Calu3 (cell line): ENCODE measurements at regions of chr16 and their contacts with region 1.

Region 1: GRCh38 chr16:24580665-24581064 is 41.3 kb downstream of the RBBP6 start:
- DNase-seq: no peak
- H3K4me3 Mint-ChIP-seq: no peak overlapping the region
- H3K27ac Mint-ChIP-seq: no peak overlapping the region
- H3K4me1 Mint-ChIP-seq: peaks cover 13% of the 10 kb centered on the region
- H3K27me3 Mint-ChIP-seq: no peaks in the 10 kb centered on the region
- CTCF ChIP-seq: no peak

Region 2: GRCh38 chr16:24418666-24419065 is 162.0 kb before region 1 on chr16:
- CTCF ChIA-PET with region 1: no interaction called
- intact Hi-C with region 1: no loop called
- DNase-seq: no peak
- H3K4me3 Mint-ChIP-seq: no peak overlapping the region
- H3K27ac Mint-ChIP-seq: no peak overlapping the region
- H3K4me1 Mint-ChIP-seq: no peaks in the 10 kb centered on the region
- H3K27me3 Mint-ChIP-seq: peaks cover 52% of the 10 kb centered on the region
- CTCF ChIP-seq: no peak

Region 3: GRCh38 chr16:24689145-24689544 is 108.5 kb after region 1 on chr16:
- CTCF ChIA-PET with region 1: interaction called, 4 read pairs
- intact Hi-C with region 1: loop called (anchors 2 kb)
- DNase-seq: peak; percentile 48
- H3K4me3 Mint-ChIP-seq: no peak overlapping the region
- H3K27ac Mint-ChIP-seq: no peak overlapping the region
- H3K4me1 Mint-ChIP-seq: peaks cover 10% of the 10 kb centered on the region
- H3K27me3 Mint-ChIP-seq: no peaks in the 10 kb centered on the region
- CTCF ChIP-seq: peak; percentile 67

Region 4: DNA sequence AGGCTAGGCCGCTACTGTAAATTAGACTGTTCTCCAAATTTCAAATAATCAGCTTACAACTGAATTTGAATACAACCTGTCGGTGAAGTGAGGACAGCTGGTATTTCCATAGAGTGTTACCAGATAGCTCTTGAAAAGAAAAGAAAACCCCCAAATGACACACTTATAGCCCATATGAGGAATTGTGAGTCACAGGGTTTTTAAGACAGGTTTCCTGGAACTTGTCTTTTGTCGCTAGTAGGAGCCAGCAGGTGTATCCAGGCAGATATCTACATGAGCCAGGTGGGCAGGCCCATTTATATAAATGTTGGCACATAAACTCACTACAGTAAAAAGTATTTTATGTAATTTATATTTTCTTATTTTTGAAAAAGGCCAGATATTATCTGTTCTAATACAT is 172.8 kb after region 1 on chr16:
- CTCF ChIA-PET with region 1: no interaction called
- intact Hi-C with region 1: loop called (anchors 5 kb)
- DNase-seq: no peak
- H3K4me3 Mint-ChIP-seq: no peak overlapping the region
- H3K27ac Mint-ChIP-seq: no peak overlapping the region
- H3K4me1 Mint-ChIP-seq: peaks cover 9% of the 10 kb centered on the region
- H3K27me3 Mint-ChIP-seq: no peaks in the 10 kb centered on the region
- CTCF ChIP-seq: no peak

Region 5: DNA sequence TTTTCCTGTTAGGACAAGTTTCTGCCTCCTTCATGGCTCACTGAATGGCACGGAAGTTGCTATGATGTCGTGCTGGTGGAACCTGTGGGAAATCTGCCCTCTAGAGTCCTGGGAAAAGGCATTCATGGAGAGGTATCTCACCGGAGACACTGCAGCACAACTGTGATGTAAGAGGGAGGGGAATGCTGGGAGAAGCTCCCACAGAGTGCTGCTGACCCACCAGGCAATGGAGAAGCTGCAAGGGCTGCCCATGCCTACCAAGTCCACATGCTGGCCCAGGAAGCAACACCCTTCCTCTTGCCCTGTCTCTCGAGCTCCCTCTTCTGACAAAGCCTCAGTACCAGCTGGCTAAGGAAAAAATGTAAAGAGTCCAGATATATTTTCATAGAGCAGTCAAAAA is 219.9 kb after region 1 on chr16:
- CTCF ChIA-PET with region 1: interaction called, 9 read pairs
- intact Hi-C with region 1: loop called (anchors 1 kb)
- DNase-seq: peak; percentile 55
- H3K4me3 Mint-ChIP-seq: no peak overlapping the region
- H3K27ac Mint-ChIP-seq: no peak overlapping the region
- H3K4me1 Mint-ChIP-seq: no peaks in the 10 kb centered on the region
- H3K27me3 Mint-ChIP-seq: no peaks in the 10 kb centered on the region
- CTCF ChIP-seq: peak; percentile 39

Region 6: GRCh38 chr16:24950275-24950674 is 369.6 kb after region 1 on chr16:
- CTCF ChIA-PET with region 1: no interaction called
- intact Hi-C with region 1: no loop called
- DNase-seq: no peak
- H3K4me3 Mint-ChIP-seq: no peak overlapping the region
- H3K27ac Mint-ChIP-seq: no peak overlapping the region
- H3K4me1 Mint-ChIP-seq: no peaks in the 10 kb centered on the region
- H3K27me3 Mint-ChIP-seq: no peaks in the 10 kb centered on the region
- CTCF ChIP-seq: no peak